ENCODE measurements at regions of chr10 and their contacts with region 1.

Region 1: GRCh38 chr10:16559236-16559773 is 37.6 kb upstream of the C1QL3 start:
- DNase-seq: no peak
- ATAC-seq: no peak
- H3K4me3 ChIP-seq: no peak overlapping the region
- H3K27ac ChIP-seq: no peak overlapping the region
- H3K4me1 ChIP-seq: no peaks in the 10 kb centered on the region
- H3K27me3 ChIP-seq: no peaks in the 10 kb centered on the region
- CTCF ChIP-seq: no peak
- POLR2A ChIP-seq: no peak

Region 2: DNA sequence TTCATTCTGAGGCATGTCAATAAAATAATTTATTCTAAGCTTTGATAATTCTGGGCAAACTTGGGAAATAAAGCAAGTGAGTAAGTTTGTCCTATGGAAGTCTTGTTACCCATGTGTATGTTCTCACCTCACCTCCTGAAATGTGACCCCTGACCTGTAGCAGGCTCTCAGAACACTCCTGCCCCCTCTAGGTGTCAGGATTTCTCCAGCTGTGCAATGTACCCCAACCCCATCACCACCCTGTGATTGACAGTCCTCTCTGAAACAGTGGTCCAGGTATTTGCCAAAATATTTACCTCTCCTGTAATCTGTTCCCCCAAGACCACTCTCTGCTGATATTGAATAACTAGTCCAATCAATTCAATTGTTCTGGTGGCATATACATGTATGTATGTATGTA is 245.0 kb before region 1 on chr10:
- intact Hi-C with region 1: loop called in 1 of 10 experiments (anchors 10 kb)
- DNase-seq: no peak
- ATAC-seq: no peak
- H3K4me3 ChIP-seq: no peak overlapping the region
- H3K27ac ChIP-seq: no peak overlapping the region
- H3K4me1 ChIP-seq: no peaks in the 10 kb centered on the region
- H3K27me3 ChIP-seq: no peaks in the 10 kb centered on the region
- CTCF ChIP-seq: no peak
- POLR2A ChIP-seq: no peak

Region 3: GRCh38 chr10:16756561-16757222 is 197.4 kb after region 1 on chr10:
- intact Hi-C with region 1: no loop called
- DNase-seq: no peak
- ATAC-seq: peak in 1 of 4 donors; percentile 49
- H3K4me3 ChIP-seq: no peak overlapping the region
- H3K27ac ChIP-seq: no peak overlapping the region
- H3K4me1 ChIP-seq: peaks cover 0 to 11% (median 0%) of the 10 kb centered on the region in 12 donors
- H3K27me3 ChIP-seq: no peaks in the 10 kb centered on the region
- CTCF ChIP-seq: no peak
- POLR2A ChIP-seq: no peak

Measured in heart left ventricle (tissue), 16 donors.